ENCODE measurements at regions of chr11 and their contacts with region 1.

Region 1: GRCh38 chr11:95138448-95138847 is 48.8 kb downstream of the ENDOD1 start:
- DNase-seq: peak; percentile 64
- H3K4me3 ChIP-seq: no peak overlapping the region
- H3K27ac ChIP-seq: no peak overlapping the region
- H3K4me1 ChIP-seq: no peaks in the 10 kb centered on the region
- CTCF ChIP-seq: peak; percentile 81

Region 2: GRCh38 chr11:94786264-94787126 is 352.0 kb before region 1 on chr11:
- CTCF ChIA-PET with region 1: no interaction called
- POLR2A ChIA-PET with region 1: no interaction called
- intact Hi-C with region 1: loop called (anchors 10 kb)
- DNase-seq: peak; percentile 20
- H3K4me3 ChIP-seq: no peak overlapping the region
- H3K27ac ChIP-seq: no peak overlapping the region
- H3K4me1 ChIP-seq: no peaks in the 10 kb centered on the region
- CTCF ChIP-seq: peak; percentile 79

Region 3: GRCh38 chr11:94973099-94973968 is 165.1 kb before region 1 on chr11 and contains the starts of genes CWC15 and KDM4D:
- CTCF ChIA-PET with region 1: no interaction called
- POLR2A ChIA-PET with region 1: no interaction called
- intact Hi-C with region 1: loop called (anchors 2 kb)
- DNase-seq: peak; percentile 95
- H3K4me3 ChIP-seq: peak within 1 kb of the TSS; percentile 94
- H3K27ac ChIP-seq: peak within 1 kb of the TSS; percentile 39
- H3K4me1 ChIP-seq: peaks cover 10% of the 10 kb centered on the region
- CTCF ChIP-seq: no peak
- total RNA-seq, gene CWC15: 42.5 and 52.3 TPM in 2 replicates
- total RNA-seq, gene KDM4D: 0.62 and 1.0 TPM in 2 replicates

Region 4: DNA sequence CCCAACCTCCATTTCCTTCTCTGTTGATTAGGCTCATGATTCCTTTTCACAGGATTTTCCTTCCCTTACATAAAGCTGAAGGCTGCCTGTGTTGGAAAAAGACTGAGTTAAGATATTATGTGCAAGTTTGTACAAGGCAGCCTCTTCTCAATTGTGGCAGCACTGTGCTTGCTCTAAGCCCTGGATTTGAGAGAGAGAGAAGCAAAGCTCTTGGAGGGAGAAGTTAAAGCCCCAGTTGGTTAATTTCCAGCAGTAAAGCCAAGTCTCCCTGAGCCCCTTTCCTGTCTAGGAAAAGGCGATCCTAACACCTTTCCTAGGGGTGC is 220.9 kb after region 1 on chr11:
- CTCF ChIA-PET with region 1: no interaction called
- POLR2A ChIA-PET with region 1: no interaction called
- intact Hi-C with region 1: no loop called
- DNase-seq: no peak
- H3K4me3 ChIP-seq: no peak overlapping the region
- H3K27ac ChIP-seq: no peak overlapping the region
- H3K4me1 ChIP-seq: no peaks in the 10 kb centered on the region
- CTCF ChIP-seq: no peak

Measured in OCI-LY7 (cell line).